Esophagus muscularis mucosa (tissue), 4 donors: ENCODE measurements at regions of chr15 and their contacts with region 1.

Region 1: GRCh38 chr15:40893733-40894688 is at the start of gene VPS18:
- DNase-seq: peak; percentile 99
- H3K4me3 ChIP-seq: peak within 1 kb of the TSS; percentile 57 to 84 (median 77)
- H3K27ac ChIP-seq: peak within 1 kb of the TSS; percentile 88 to 97 (median 92)
- H3K4me1 ChIP-seq: peaks cover 20 to 32% (median 23%) of the 10 kb centered on the region in 4 donors
- H3K27me3 ChIP-seq: no peaks in the 10 kb centered on the region
- CTCF ChIP-seq: peak in 2 of 3 experiments; percentile 99
- EP300 ChIP-seq: no peak
- POLR2A ChIP-seq: peak; percentile 54
- total RNA-seq, gene VPS18: 28.7 to 36.6 (median 32.2) TPM

Region 2: DNA sequence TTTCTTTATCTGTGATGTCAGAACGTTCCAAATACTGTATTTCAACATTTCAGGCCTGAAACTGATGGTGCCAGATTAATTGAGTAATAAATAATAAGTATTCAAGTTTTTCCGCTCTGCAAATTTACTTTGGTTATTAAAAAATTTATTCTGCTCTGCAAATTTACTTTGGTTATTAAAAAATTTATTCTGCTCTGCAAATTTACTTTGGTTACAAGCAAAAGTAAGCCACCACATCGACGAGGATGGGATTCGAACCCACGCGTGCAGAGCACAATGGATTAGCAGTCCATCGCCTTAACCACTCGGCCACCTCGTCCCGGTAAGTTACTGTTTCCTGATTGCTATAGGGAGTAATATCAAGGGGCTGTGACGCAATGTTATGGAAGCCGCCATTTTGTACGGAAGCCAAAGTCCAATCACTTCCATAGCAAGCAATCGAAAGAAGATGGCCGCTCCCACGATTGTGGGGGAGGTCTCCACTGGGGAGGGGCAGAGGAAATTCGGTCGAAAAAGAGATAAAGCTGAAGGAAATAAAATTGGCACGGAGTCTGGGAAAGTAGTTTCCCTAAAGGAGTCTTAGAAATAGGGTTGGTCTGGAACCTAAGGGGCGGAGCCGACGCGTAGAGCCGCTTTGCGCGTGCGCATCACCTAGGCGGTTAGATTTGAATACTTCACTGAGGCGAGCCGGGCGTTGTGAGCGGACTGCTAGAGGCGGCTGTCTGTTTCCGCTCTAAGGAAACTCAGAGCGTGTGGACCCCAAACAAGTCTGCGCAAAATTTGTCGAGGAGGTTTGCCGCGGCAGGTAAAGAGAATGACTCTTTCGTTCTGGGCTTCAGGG is 300.2 kb before region 1 on chr15 and contains the start of gene KNL1:
- intact Hi-C with region 1: loop called (anchors 5 kb)
- DNase-seq: peak; percentile 99
- H3K4me3 ChIP-seq: peak within 1 kb of the TSS; percentile 51 to 69 (median 58)
- H3K27ac ChIP-seq: peak within 1 kb of the TSS; percentile 81 to 86 (median 84)
- H3K4me1 ChIP-seq: peaks cover 8 to 24% (median 14%) of the 10 kb centered on the region in 4 donors
- H3K27me3 ChIP-seq: peaks cover 0 to 19% (median 0%) of the 10 kb centered on the region in 4 donors
- CTCF ChIP-seq: peak in 1 of 3 experiments; percentile 8
- EP300 ChIP-seq: no peak
- POLR2A ChIP-seq: no peak
- total RNA-seq, gene KNL1: 0.06 to 0.63 (median 0.17) TPM in 3 of 4 donors, not detected in the other

Region 3: DNA sequence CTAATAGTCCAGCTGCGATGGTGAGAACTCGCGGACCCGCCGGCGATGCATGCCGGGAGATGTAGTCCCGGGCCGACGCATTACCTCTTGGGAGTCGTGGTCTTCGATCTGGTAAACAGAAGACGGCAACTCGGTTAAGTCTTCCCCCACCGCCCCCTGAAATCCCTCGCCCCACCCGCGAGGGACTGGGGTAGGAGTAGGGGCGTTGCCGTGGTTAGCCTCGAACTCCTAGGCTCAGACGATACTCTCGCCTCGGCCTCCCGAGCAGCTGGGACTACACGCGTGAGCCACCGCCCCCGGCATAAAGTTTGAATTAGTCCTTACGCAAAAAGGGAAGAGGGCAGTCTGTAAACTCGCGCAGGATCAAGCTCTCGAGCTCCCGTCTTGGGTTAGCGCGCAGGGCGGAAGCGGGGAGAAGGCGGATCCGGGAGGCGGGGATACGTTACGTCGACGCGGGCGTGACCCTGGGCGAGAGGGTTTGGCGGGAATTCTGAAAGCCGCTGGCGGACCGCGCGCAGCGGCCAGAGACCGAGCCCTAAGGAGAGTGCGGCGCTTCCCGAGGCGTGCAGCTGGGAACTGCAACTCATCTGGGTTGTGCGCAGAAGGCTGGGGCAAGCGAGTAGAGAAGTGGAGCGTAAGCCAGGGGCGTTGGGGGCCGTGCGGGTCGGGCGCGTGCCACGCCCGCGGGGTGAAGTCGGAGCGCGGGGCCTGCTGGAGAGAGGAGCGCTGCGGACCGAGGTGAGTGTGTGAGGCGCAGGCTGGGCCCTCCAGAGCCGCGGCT is 199.1 kb before region 1 on chr15 and contains the start of gene RAD51:
- intact Hi-C with region 1: loop called (anchors 2 kb)
- DNase-seq: peak; percentile 97
- H3K4me3 ChIP-seq: peak within 1 kb of the TSS; percentile 70 to 99 (median 84)
- H3K27ac ChIP-seq: peak within 1 kb of the TSS; percentile 95 to 100 (median 98)
- H3K4me1 ChIP-seq: peaks cover 18 to 23% (median 22%) of the 10 kb centered on the region in 4 donors
- H3K27me3 ChIP-seq: no peaks in the 10 kb centered on the region
- CTCF ChIP-seq: peak in 1 of 3 experiments; percentile 13
- EP300 ChIP-seq: no peak
- POLR2A ChIP-seq: peak; percentile 12
- total RNA-seq, gene RAD51: 0.50 to 0.92 (median 0.71) TPM in 3 of 4 donors, not detected in the other

Region 4: DNA sequence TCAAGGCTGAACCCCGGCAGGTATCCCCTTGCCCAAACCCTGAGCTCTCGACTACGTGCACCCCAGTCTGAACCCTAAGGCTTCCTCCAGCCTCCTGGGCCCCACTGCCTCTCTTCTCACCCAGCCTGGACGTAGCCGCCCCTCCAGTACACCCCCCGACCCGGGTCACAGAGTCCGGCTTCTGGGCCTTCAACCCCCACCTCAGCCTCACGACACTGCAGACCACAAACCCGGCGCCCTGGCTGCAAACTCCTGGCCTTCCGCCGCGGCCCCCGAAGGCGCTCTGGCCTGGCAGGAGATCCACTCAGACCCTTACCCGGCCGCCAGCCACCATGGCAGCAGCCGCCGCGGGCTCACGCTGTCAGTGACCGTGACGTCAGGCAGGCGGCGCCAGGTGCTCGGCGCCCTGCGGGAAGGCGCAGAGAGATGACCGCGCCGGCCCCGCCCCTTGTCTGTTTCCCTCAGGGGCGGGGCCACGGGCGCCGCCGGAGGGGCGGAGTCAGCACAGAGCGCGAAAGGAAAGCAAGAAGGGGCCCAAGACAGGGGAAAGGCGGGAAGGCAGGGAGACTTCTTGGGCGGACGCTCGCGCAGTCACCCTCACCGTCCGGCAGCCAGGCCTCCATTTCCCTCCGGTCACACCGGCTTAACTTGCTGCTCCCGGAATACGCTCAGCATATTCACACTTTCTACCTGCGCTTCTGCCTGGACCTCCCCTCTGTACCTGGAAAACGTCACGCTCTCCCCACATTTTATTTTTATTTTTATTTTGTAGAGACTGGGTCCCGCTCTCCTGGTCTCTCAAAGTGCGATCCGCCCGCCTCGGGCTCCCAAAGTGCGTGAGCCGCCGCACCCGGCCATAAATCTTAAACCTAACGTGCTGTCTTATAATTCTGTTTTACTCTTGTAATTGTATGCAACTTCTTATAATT is 138.9 kb before region 1 on chr15 and contains the start of gene RMDN3:
- intact Hi-C with region 1: loop called (anchors 5 kb)
- DNase-seq: peak; percentile 95
- H3K4me3 ChIP-seq: peak within 1 kb of the TSS; percentile 64 to 99 (median 88)
- H3K27ac ChIP-seq: peak within 1 kb of the TSS; percentile 72 to 86 (median 85)
- H3K4me1 ChIP-seq: peaks cover 15 to 32% (median 26%) of the 10 kb centered on the region in 4 donors
- H3K27me3 ChIP-seq: no peaks in the 10 kb centered on the region
- CTCF ChIP-seq: peak in 2 of 3 experiments; percentile 17 to 41
- EP300 ChIP-seq: no peak
- POLR2A ChIP-seq: no peak
- total RNA-seq, gene RMDN3: 29.5 to 34.9 (median 31.5) TPM

Region 5: DNA sequence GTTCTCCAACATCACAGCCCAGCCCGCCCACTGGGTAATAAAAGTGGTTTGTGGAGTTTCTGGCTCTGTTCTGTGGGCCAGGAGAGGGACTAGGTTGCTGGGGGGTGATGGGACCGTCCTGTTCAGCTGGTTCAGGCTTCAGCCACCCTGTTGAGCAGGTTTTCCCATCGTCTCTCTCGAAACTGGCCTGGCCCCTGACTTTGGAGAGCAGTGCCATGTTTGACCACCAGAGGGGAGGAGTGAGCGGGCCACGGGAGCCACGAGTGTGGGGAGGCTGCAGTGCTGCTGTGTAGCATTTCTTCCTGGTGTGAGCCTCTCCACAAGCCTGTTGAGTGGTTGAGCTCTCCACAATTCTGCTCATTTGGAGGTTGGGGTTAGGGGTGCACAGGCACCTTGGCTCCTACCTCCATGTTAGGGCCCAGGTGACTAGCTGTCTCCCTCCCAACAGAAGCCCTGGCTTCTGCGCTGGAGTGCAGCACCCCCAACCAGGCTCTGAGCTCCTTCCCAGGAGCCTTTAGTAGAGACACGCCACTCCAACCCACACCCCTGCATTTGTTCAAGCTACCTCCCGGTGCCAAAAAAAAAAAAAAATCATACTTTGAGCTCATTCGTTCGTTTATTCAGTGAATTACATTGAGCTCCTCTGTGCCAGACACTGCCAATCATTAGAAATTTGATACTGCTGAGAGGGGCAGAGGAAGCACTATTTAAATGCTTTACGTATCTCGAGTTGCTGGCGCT is 36.2 kb before region 1 on chr15:
- intact Hi-C with region 1: loop called (anchors 2 kb)
- DNase-seq: peak; percentile 95
- H3K4me3 ChIP-seq: no peak overlapping the region
- H3K27ac ChIP-seq: no peak overlapping the region
- H3K4me1 ChIP-seq: peaks cover 0 to 14% (median 6%) of the 10 kb centered on the region in 4 donors
- H3K27me3 ChIP-seq: peaks cover 0 to 53% (median 0%) of the 10 kb centered on the region in 4 donors
- CTCF ChIP-seq: peak in 2 of 3 experiments; percentile 91 to 92
- EP300 ChIP-seq: no peak
- POLR2A ChIP-seq: no peak

Region 6: DNA sequence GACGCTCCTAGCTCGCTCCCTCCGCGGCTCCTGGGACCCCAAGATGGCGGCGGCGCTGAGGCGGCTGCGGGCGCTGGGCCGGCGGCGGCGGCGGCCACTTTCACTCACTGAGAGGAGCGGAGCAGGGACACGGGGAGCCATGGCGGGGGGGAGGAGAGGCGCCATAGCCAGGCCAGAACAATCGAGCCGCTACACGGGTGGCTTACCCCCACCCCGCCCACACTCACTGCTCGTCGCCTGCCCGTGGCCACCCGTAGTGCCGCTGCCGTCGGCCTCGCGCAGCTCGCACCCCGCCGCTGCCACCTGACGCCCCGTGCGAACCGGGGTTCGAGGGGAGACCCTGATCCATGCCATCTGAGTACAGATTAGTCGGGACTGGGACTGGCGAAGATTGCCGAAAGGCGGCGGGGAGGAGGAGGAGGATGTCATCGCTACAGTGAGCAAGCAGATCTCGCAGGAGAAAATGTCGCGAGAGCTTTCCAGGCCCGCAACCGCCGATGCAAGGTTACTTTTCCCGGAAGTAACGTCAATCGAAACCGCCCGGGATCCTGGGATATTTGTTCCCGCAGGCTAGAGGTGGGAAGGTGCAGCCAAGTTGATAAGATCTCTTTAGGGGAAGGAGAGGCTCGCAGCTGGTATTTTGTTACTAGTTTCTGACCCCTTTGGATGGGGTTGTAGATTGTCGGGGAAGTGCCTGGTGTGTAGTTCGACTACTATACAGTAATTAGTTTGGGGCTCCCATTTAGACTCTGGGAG is 222.3 kb after region 1 on chr15 and contains the start of gene INO80:
- intact Hi-C with region 1: loop called (anchors 5 kb)
- DNase-seq: peak; percentile 99
- H3K4me3 ChIP-seq: peak within 1 kb of the TSS; percentile 90 to 99 (median 93)
- H3K27ac ChIP-seq: peak within 1 kb of the TSS; percentile 99 to 100 (median 99)
- H3K4me1 ChIP-seq: peaks cover 12 to 43% (median 30%) of the 10 kb centered on the region in 4 donors
- H3K27me3 ChIP-seq: peaks cover 0 to 11% (median 0%) of the 10 kb centered on the region in 4 donors
- CTCF ChIP-seq: peak in 1 of 3 experiments; percentile 3
- EP300 ChIP-seq: peak; percentile 8
- POLR2A ChIP-seq: no peak
- total RNA-seq, gene INO80: 22.4 to 28.7 (median 24.0) TPM

Region 7: DNA sequence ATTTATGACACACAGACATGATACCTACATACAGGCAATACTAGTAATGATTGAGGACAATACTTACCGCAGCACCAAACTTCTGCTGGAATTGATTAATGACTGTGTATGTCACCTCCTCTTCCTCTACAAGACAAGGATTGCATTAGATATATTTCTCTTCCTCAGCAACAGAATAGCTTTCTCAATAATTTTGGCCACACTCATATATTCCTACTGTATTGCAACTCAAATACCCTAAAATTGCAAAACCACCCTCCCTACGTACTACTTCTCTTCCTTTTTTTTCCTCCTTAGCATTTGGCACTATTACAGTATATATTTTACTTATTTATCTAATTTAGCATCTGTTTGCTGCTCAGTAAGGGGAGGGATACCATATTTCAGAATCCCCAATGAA is 321.7 kb after region 1 on chr15:
- intact Hi-C with region 1: no loop called
- DNase-seq: no peak
- H3K4me3 ChIP-seq: no peak overlapping the region
- H3K27ac ChIP-seq: no peak overlapping the region
- H3K4me1 ChIP-seq: no peaks in the 10 kb centered on the region
- H3K27me3 ChIP-seq: peaks cover 0 to 40% (median 0%) of the 10 kb centered on the region in 4 donors
- CTCF ChIP-seq: no peak
- EP300 ChIP-seq: no peak
- POLR2A ChIP-seq: no peak